Mammary epithelial cell (primary cell): ENCODE measurements at regions of chr2 and their contacts with region 1.

Region 1: GRCh38 chr2:58055033-58055786 is 8.6 kb downstream of the VRK2 start:
- DNase-seq: no peak
- H3K4me3 ChIP-seq: no peak overlapping the region
- H3K27ac ChIP-seq: no peak overlapping the region
- H3K4me1 ChIP-seq: no peaks in the 10 kb centered on the region
- H3K27me3 ChIP-seq: no peaks in the 10 kb centered on the region
- CTCF ChIP-seq: no peak

Region 2: GRCh38 chr2:58032016-58032763 is 23.0 kb before region 1 on chr2:
- CTCF ChIA-PET with region 1: no interaction called
- dilution Hi-C with region 1: no loop called
- in situ Hi-C with region 1: no loop called
- intact Hi-C with region 1: no loop called
- DNase-seq: no peak
- H3K4me3 ChIP-seq: no peak overlapping the region
- H3K27ac ChIP-seq: no peak overlapping the region
- H3K4me1 ChIP-seq: no peaks in the 10 kb centered on the region
- H3K27me3 ChIP-seq: no peaks in the 10 kb centered on the region
- CTCF ChIP-seq: no peak

Region 3: DNA sequence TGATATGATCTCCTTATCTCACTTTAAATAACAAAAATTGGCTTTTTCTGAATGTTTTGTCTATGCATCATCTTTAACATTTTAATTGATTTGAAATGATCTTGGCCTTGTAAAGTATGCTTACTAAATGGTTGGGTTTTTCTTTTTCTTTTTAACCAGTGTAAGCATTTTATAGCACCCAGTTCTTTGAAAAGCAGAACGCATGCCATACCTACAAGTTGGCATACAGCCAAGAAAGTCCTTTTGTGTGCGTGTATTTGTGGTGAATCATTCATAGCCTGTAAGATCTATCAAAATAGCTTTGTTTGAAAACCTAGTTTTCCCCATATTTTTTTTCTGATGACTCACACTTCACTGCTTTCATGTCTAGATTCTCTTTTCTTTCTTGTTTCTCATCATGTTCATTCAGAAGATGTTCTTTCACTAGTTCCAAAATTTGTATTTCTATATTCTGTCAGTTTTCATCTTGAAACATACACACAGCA is 12.7 kb before region 1 on chr2:
- CTCF ChIA-PET with region 1: no interaction called
- dilution Hi-C with region 1: no loop called
- in situ Hi-C with region 1: no loop called
- intact Hi-C with region 1: no loop called
- DNase-seq: peak; percentile 86
- H3K4me3 ChIP-seq: no peak overlapping the region
- H3K27ac ChIP-seq: no peak overlapping the region
- H3K4me1 ChIP-seq: peaks cover 11% of the 10 kb centered on the region
- H3K27me3 ChIP-seq: no peaks in the 10 kb centered on the region
- CTCF ChIP-seq: no peak

Region 4: DNA sequence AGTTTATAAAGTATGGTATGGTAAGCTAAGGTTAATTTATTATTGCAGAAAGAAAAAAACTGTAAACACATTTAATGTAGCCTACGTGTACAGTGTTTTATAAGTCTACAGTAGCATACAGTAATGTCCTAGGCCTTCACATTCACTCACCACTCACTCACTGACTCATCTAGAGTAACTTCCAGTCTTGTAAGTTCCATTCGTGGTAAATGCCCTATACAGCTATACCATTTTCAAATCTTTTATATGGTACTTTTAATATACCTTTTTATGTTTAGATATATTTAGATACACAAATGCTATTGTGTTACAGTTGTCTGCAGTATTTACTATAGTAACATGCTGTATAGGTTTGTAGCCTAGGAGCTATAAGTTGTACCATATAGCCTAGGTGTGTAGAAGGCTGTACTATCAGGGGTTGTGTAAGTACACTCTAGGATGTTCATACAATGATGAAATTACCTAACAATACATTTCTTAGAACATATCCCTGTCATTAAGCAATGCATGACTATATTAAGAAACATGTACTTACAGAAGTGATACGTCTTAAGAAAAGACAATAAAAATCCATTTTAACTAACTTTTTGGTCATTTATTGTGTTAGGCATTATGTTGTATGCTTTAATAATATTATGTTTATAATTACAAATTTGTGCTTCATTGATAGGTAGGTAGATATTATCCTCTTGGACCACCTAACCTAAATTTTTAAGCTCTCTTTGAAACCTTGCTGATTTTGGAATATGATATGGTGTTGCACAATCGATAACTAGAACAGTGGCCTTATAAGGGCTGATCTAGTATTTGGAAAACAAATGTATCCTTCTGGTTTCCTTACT is 43.3 kb after region 1 on chr2:
- CTCF ChIA-PET with region 1: no interaction called
- dilution Hi-C with region 1: loop called (anchors 5 kb)
- in situ Hi-C with region 1: no loop called
- intact Hi-C with region 1: no loop called
- DNase-seq: peak; percentile 66
- H3K4me3 ChIP-seq: no peak overlapping the region
- H3K27ac ChIP-seq: peak overlapping the region; percentile 48
- H3K4me1 ChIP-seq: peaks cover 3% of the 10 kb centered on the region
- H3K27me3 ChIP-seq: no peaks in the 10 kb centered on the region
- CTCF ChIP-seq: no peak